A549 (cell line): ENCODE measurements at regions of chr10 and their contacts with region 1.

Region 1: GRCh38 chr10:80444646-80445319 is 9.3 kb upstream of the TSPAN14 start:
- DNase-seq: peak; percentile 83 to 89
- ATAC-seq: peak; percentile 88 to 92
- H3K4me3 ChIP-seq: no peak overlapping the region
- H3K27ac ChIP-seq: peak overlapping the region; percentile 64 to 80
- H3K4me1 ChIP-seq: peaks cover 26% of the 10 kb centered on the region
- CTCF ChIP-seq: peak; percentile 98
- EP300 ChIP-seq: no peak
- POLR2A ChIP-seq: no peak
- RAD21 ChIP-seq: peak; percentile 99

Region 2: GRCh38 chr10:80382989-80383388 is 61.8 kb before region 1 on chr10:
- CTCF ChIA-PET with region 1: interaction called, 184 read pairs
- POLR2A ChIA-PET with region 1: no interaction called
- DNase-seq: peak; percentile 36 to 46
- ATAC-seq: peak; percentile 63 to 70; a peak in 3 of 6 replicates
- H3K4me3 ChIP-seq: no peak overlapping the region
- H3K27ac ChIP-seq: peak overlapping the region in 1 of 2 experiments; percentile 46; a peak in 1 of 6 replicates
- H3K4me1 ChIP-seq: no peaks in the 10 kb centered on the region
- CTCF ChIP-seq: peak; percentile 86
- EP300 ChIP-seq: no peak
- POLR2A ChIP-seq: no peak
- RAD21 ChIP-seq: peak; percentile 85 to 90

Region 3: DNA sequence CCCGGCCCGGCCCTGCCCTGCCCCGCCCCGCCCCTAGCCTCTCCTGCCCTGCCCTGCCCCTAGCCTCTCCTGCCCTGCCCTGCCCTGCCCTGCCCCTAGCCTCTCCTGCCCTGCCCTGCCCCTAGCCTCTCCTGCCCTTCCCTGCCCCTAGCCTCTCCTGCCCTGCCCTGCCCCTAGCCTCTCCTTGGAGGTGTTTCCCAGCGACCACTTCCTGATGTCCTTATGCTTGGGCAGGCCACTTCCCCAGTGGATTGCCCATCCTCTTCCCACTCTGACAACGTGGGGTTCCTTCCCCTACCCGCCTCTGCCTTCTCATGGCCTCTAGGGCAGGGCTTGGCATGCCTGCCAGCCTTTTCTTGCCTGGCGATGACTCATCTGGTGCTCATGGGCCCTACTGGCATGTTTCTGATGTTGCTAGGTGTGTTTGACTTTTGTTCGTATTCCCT is 15.2 kb before region 1 on chr10:
- CTCF ChIA-PET with region 1: interaction called, 107 read pairs
- POLR2A ChIA-PET with region 1: no interaction called
- DNase-seq: peak; percentile 87 to 95
- ATAC-seq: peak; percentile 99
- H3K4me3 ChIP-seq: no peak overlapping the region
- H3K27ac ChIP-seq: peak overlapping the region; percentile 83 to 89
- H3K4me1 ChIP-seq: peaks cover 32% of the 10 kb centered on the region
- CTCF ChIP-seq: no peak
- EP300 ChIP-seq: no peak
- POLR2A ChIP-seq: no peak
- RAD21 ChIP-seq: no peak

Region 4: GRCh38 chr10:80487791-80488538 is 43.2 kb after region 1 on chr10:
- CTCF ChIA-PET with region 1: interaction called, 30 read pairs
- POLR2A ChIA-PET with region 1: no interaction called
- DNase-seq: no peak
- ATAC-seq: no peak
- H3K4me3 ChIP-seq: no peak overlapping the region
- H3K27ac ChIP-seq: peak overlapping the region; percentile 35 to 90
- H3K4me1 ChIP-seq: peaks cover 99% of the 10 kb centered on the region
- CTCF ChIP-seq: no peak
- EP300 ChIP-seq: no peak
- POLR2A ChIP-seq: no peak
- RAD21 ChIP-seq: no peak

Region 5: GRCh38 chr10:80530251-80530650 is 85.5 kb after region 1 on chr10:
- CTCF ChIA-PET with region 1: interaction called, 81 read pairs
- POLR2A ChIA-PET with region 1: no interaction called
- DNase-seq: peak; percentile 79 to 83
- ATAC-seq: peak; percentile 82 to 84
- H3K4me3 ChIP-seq: no peak overlapping the region
- H3K27ac ChIP-seq: peak overlapping the region; percentile 72 to 76
- H3K4me1 ChIP-seq: peaks cover 64% of the 10 kb centered on the region
- CTCF ChIP-seq: peak; percentile 63
- EP300 ChIP-seq: peak in 1 of 2 experiments; percentile 66; a peak in 1 of 5 replicates
- POLR2A ChIP-seq: no peak
- RAD21 ChIP-seq: peak; percentile 78 to 83

Region 6: GRCh38 chr10:80662577-80663261 is 217.9 kb after region 1 on chr10:
- CTCF ChIA-PET with region 1: interaction called, 24 read pairs
- POLR2A ChIA-PET with region 1: no interaction called
- DNase-seq: peak; percentile 84 to 87
- ATAC-seq: peak; percentile 82 to 93
- H3K4me3 ChIP-seq: peak overlapping the region; percentile 35
- H3K27ac ChIP-seq: peak overlapping the region; percentile 65 to 76
- H3K4me1 ChIP-seq: peaks cover 4% of the 10 kb centered on the region; the same call in 2 of the 3 replicates
- CTCF ChIP-seq: peak; percentile 88
- EP300 ChIP-seq: no peak
- POLR2A ChIP-seq: no peak
- RAD21 ChIP-seq: peak; percentile 57 to 67